ENCODE measurements at regions of chr2 and their contacts with region 1.

Region 1: DNA sequence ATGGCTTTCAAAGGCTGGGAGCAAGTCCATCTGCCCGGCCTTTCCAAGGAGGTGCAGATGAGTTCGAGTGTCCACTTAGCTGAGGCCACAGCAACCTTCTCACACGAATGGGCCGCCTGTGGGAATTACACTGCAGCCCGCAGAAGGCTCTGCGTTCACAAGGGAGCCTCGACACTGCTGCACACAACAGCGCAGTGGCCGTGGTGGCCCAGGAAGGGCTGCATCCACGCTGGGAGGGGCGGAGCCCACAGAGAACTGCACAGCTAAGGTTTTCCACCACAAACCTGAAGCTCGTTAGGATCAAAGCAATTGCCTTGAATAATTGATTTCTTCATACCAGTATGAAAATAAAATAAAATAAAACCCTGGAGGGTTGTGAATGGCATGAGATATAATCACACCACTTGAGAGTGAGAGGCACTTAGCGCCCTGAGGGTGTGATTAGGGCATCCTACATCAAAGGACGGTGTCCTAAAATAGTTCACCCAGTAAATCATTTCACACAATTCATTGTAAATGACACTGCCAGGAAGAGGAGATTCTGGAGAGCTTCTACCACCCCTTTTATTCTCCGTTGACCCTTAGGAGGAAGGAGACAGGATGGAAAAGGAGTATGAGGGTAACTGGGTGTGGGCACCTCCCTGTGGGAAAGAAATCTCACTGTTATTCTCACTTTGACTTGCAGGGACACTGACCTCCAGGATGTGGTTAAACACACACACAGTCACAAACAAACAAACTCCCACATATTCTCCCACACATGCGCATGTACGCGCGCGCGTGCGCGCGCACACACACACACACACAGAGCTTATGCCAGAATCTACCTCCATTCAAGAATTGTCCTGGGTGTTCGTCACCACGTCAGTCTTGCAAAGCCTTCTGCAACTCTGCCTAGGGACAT is 256.6 kb upstream of the ID2 start:
- DNase-seq: no peak
- ATAC-seq: no peak

Region 2: GRCh38 chr2:7835693-7836680 is 589.3 kb before region 1 on chr2:
- intact Hi-C with region 1: no loop called
- DNase-seq: no peak
- ATAC-seq: no peak

Region 3: GRCh38 chr2:8469709-8470493 is 44.7 kb after region 1 on chr2:
- intact Hi-C with region 1: loop called (anchors 5 kb)
- DNase-seq: no peak
- ATAC-seq: no peak